CD4-positive, alpha-beta T cell (primary cell): ENCODE measurements at regions of chr3 and their contacts with region 1.

Region 1: GRCh38 chr3:57555738-57556458 is at the start of gene PDE12:
- DNase-seq: peak; percentile 66 to 92 (median 78)
- ATAC-seq: peak; percentile 67
- H3K4me3 ChIP-seq: peak within 1 kb of the TSS; percentile 88
- H3K4me3 Mint-ChIP-seq: peak within 1 kb of the TSS; percentile 94
- H3K27ac ChIP-seq: peak within 1 kb of the TSS; percentile 84 to 98
- H3K27ac Mint-ChIP-seq: peak within 1 kb of the TSS; percentile 93
- H3K4me1 ChIP-seq: peaks cover 34% of the 10 kb centered on the region
- H3K4me1 Mint-ChIP-seq: peaks cover 45% of the 10 kb centered on the region
- H3K27me3 ChIP-seq: no peaks in the 10 kb centered on the region
- H3K27me3 Mint-ChIP-seq: no peaks in the 10 kb centered on the region
- CTCF ChIP-seq: no peak
- total RNA-seq, gene PDE12: 40.5 to 40.9 TPM

Region 2: DNA sequence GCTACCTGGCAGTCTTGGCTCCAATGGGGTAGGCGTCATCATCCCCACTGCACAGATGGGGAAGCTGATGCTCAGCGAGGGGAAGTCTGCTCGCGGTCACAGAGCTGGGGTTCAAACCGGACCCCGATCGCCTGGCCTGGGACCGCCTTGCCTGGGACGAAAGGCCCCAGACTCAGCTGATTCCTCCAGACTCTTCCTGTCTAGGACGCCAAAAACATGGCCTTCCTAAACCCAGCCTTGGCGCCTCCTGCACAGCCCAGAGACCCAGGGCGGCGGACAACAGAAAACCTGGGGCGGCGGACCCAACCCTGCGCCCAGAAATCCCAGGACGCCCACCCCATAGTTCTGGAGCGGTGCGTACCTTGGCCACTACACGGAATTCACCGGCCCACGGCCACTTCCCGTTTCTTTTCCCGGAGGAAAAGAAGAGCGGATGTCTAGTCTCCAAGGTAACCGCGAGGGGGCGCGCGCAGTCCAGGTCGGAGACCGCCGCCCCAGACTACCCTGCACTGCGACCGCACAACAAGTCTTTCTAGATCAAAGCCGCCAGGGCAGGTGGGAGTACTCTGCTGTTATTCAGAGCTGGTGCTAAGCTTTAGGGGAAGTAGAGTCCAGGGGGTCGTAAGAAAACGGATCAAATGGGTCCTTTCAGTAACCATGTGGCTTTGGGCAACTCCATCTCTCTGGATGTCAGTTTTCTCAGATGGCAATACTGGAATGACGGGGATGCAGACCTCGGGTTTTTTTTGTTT is 385.9 kb before region 1 on chr3:
- CTCF ChIA-PET with region 1: no interaction called
- POLR2A ChIA-PET with region 1: interaction called, 3 read pairs
- intact Hi-C with region 1: loop called in 1 of 2 experiments (anchors 10 kb)
- DNase-seq: peak; percentile 28 to 77 (median 51)
- ATAC-seq: peak; percentile 56
- H3K4me3 ChIP-seq: peak overlapping the region; percentile 38
- H3K4me3 Mint-ChIP-seq: no peak overlapping the region
- H3K27ac ChIP-seq: no peak overlapping the region
- H3K27ac Mint-ChIP-seq: no peak overlapping the region
- H3K4me1 ChIP-seq: peaks cover 8% of the 10 kb centered on the region
- H3K4me1 Mint-ChIP-seq: peaks cover 7% of the 10 kb centered on the region
- H3K27me3 ChIP-seq: peaks cover 30 to 47% of the 10 kb centered on the region in 2 experiments
- H3K27me3 Mint-ChIP-seq: peaks cover 78% of the 10 kb centered on the region
- CTCF ChIP-seq: peak; percentile 97

Region 3: GRCh38 chr3:57227204-57227929 is 328.5 kb before region 1 on chr3 and contains the start of gene APPL1:
- CTCF ChIA-PET with region 1: no interaction called
- POLR2A ChIA-PET with region 1: interaction called, 13 read pairs
- intact Hi-C with region 1: loop called in 1 of 2 experiments (anchors 5 kb)
- DNase-seq: peak; percentile 61 to 93 (median 84)
- ATAC-seq: peak; percentile 88
- H3K4me3 ChIP-seq: peak within 1 kb of the TSS; percentile 80
- H3K4me3 Mint-ChIP-seq: peak within 1 kb of the TSS; percentile 95
- H3K27ac ChIP-seq: no peak within 1 kb of the TSS
- H3K27ac Mint-ChIP-seq: peak within 1 kb of the TSS; percentile 82
- H3K4me1 ChIP-seq: peaks cover 10% of the 10 kb centered on the region
- H3K4me1 Mint-ChIP-seq: peaks cover 33% of the 10 kb centered on the region
- H3K27me3 ChIP-seq: no peaks in the 10 kb centered on the region
- H3K27me3 Mint-ChIP-seq: no peaks in the 10 kb centered on the region
- CTCF ChIP-seq: no peak
- total RNA-seq, gene APPL1: 21.3 to 22.9 TPM

Region 4: GRCh38 chr3:57597122-57597923 is 41.4 kb after region 1 on chr3 and contains the start of gene ARF4:
- CTCF ChIA-PET with region 1: interaction called, 8 read pairs
- POLR2A ChIA-PET with region 1: interaction called, 190 read pairs
- intact Hi-C with region 1: loop called (anchors 1 kb)
- DNase-seq: peak; percentile 97 to 100 (median 99)
- ATAC-seq: peak; percentile 87
- H3K4me3 ChIP-seq: peak within 1 kb of the TSS; percentile 92
- H3K4me3 Mint-ChIP-seq: peak within 1 kb of the TSS; percentile 85
- H3K27ac ChIP-seq: peak within 1 kb of the TSS; percentile 98 to 99
- H3K27ac Mint-ChIP-seq: peak within 1 kb of the TSS; percentile 97
- H3K4me1 ChIP-seq: peaks cover 33% of the 10 kb centered on the region
- H3K4me1 Mint-ChIP-seq: peaks cover 58% of the 10 kb centered on the region
- H3K27me3 ChIP-seq: no peaks in the 10 kb centered on the region
- H3K27me3 Mint-ChIP-seq: no peaks in the 10 kb centered on the region
- CTCF ChIP-seq: peak; percentile 48
- total RNA-seq, gene ARF4: 56.7 to 59.9 TPM

Region 5: DNA sequence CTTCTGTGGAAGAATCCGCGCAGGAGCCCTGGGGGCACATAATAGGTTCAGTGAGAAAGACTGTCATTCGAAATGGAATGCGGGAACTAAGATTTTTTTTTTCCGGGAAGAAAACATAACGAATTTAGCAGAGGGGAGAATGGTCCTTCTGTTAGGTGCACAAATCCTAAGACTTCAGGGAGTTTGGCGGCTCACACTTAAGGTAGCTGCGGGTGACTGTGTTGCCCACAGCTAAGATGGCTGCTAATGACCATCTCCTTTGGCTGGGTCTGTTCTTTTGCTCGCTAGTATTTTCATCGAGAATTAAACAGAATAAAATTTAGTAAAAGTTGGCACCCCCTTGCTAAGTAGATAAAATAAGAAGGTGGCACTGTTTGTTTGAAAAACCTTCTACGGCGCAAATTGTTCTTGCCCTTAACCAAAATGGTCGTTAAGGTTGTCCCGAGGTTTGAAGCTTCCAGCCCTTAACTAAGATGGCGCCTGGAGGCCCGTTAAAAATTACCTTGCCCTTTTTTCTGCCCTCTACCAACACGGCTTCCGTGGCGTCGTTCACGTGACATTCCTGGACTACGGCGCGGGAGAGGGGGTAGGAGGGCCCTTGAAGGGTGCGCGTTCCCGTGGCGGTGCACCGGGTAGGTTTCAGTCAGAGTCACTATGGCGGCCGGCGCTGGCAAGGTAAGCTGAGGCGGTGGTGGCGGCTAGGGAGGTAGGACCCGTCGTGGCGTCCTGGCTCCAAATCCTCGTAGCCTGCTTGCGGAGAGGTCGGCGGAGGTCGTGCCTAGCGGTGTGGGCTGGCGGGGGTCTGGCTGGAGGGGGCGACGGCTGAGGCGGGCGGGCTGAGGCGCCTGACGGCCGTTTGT is 200.0 kb after region 1 on chr3 and contains the start of gene SLMAP:
- CTCF ChIA-PET with region 1: no interaction called
- POLR2A ChIA-PET with region 1: interaction called, 35 read pairs
- intact Hi-C with region 1: loop called (anchors 1 to 5 kb)
- DNase-seq: peak; percentile 91 to 98 (median 94)
- ATAC-seq: peak; percentile 92
- H3K4me3 ChIP-seq: peak within 1 kb of the TSS; percentile 72
- H3K4me3 Mint-ChIP-seq: peak within 1 kb of the TSS; percentile 97
- H3K27ac ChIP-seq: peak within 1 kb of the TSS; percentile 82 to 87
- H3K27ac Mint-ChIP-seq: peak within 1 kb of the TSS; percentile 97
- H3K4me1 ChIP-seq: peaks cover 33% of the 10 kb centered on the region
- H3K4me1 Mint-ChIP-seq: peaks cover 46% of the 10 kb centered on the region
- H3K27me3 ChIP-seq: no peaks in the 10 kb centered on the region
- H3K27me3 Mint-ChIP-seq: no peaks in the 10 kb centered on the region
- CTCF ChIP-seq: no peak
- total RNA-seq, gene SLMAP: 51.3 to 52.2 TPM

Region 6: DNA sequence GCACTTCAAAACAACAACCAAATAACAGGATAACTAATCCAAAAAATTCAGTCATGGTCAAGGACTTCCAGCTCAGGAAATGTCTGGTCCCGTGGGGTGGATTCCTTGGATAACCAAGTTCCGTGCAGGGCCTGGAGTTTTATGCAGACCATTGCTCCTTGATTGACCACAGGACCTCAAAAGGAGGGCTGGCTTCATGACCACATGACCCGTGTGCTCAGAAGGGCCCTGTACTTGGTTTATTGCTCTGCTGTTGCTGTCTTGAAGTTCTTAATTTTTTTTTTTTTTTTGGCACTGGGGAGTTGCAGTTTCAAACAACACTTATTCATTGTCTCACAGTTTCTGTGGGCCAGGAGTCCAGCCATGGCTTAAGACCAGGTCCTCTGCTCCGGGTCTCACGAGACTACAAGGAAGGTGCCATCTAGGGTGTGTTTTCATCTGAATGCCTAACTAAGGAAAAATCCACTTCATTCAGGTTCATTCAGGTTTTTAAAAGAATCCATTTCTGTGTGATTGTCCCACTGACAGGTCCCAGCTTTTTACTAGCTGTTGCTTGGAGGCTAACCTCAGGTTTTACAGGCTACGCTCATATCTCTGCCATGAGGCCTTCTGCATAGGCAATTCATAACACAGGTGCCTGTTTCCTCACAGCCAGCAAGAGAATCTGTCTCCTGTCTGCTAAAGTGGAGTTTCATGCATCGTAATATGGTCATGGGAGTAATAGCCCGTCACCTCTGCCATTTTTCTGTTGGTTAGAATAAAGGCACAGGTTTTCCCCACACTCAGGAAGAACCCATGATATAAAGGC is 517.6 kb after region 1 on chr3:
- CTCF ChIA-PET with region 1: no interaction called
- POLR2A ChIA-PET with region 1: no interaction called
- intact Hi-C with region 1: no loop called
- DNase-seq: no peak
- ATAC-seq: no peak
- H3K4me3 ChIP-seq: no peak overlapping the region
- H3K4me3 Mint-ChIP-seq: no peak overlapping the region
- H3K27ac ChIP-seq: no peak overlapping the region
- H3K27ac Mint-ChIP-seq: no peak overlapping the region
- H3K4me1 ChIP-seq: peaks cover 9% of the 10 kb centered on the region
- H3K4me1 Mint-ChIP-seq: peaks cover 48% of the 10 kb centered on the region
- H3K27me3 ChIP-seq: no peaks in the 10 kb centered on the region
- H3K27me3 Mint-ChIP-seq: no peaks in the 10 kb centered on the region
- CTCF ChIP-seq: no peak

Region 7: GRCh38 chr3:58237238-58237940 is 681.5 kb after region 1 on chr3 and contains the start of gene ABHD6:
- CTCF ChIA-PET with region 1: no interaction called
- POLR2A ChIA-PET with region 1: no interaction called
- intact Hi-C with region 1: loop called in 1 of 2 experiments (anchors 10 kb)
- DNase-seq: peak; percentile 64 to 89 (median 79)
- ATAC-seq: peak; percentile 88
- H3K4me3 ChIP-seq: peak within 1 kb of the TSS; percentile 95
- H3K4me3 Mint-ChIP-seq: peak within 1 kb of the TSS; percentile 96
- H3K27ac ChIP-seq: peak within 1 kb of the TSS; percentile 24 to 57
- H3K27ac Mint-ChIP-seq: peak within 1 kb of the TSS; percentile 61
- H3K4me1 ChIP-seq: peaks cover 19% of the 10 kb centered on the region
- H3K4me1 Mint-ChIP-seq: peaks cover 14% of the 10 kb centered on the region
- H3K27me3 ChIP-seq: peaks cover 0 to 3% of the 10 kb centered on the region in 2 experiments
- H3K27me3 Mint-ChIP-seq: peaks cover 18% of the 10 kb centered on the region
- CTCF ChIP-seq: peak; percentile 16
- total RNA-seq, gene ABHD6: 0.71 to 1.9 TPM

Region 8: GRCh38 chr3:59245859-59246501 is 1690.1 kb after region 1 on chr3:
- CTCF ChIA-PET with region 1: no interaction called
- POLR2A ChIA-PET with region 1: no interaction called
- intact Hi-C with region 1: no loop called
- DNase-seq: no peak
- ATAC-seq: no peak
- H3K4me3 ChIP-seq: no peak overlapping the region
- H3K4me3 Mint-ChIP-seq: no peak overlapping the region
- H3K27ac ChIP-seq: no peak overlapping the region
- H3K27ac Mint-ChIP-seq: no peak overlapping the region
- H3K4me1 ChIP-seq: no peaks in the 10 kb centered on the region
- H3K4me1 Mint-ChIP-seq: no peaks in the 10 kb centered on the region
- H3K27me3 ChIP-seq: no peaks in the 10 kb centered on the region
- H3K27me3 Mint-ChIP-seq: no peaks in the 10 kb centered on the region
- CTCF ChIP-seq: no peak